Ascending aorta (tissue), 2 donors: ENCODE measurements at regions of chr4 and their contacts with region 1.

Region 1: DNA sequence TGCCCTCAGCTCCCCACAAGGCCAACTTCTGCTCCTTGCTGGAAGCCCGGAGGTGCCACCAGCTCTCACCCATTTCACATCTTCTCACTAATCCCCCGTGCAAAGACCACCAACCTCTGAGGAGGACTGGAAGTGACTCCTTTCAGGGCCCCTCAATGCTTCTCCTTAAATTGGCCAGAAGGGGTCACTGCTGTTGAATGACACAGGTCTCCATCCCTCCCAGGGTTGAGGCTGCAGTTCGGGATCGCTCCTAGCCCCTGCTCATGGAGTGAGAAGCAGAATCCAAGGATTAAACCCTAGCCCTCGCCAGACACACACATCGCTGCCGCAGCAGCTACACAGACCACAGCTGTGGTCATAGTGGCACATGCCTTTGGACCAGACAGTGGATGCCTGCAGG is 279.5 kb upstream of the TAPT1 start:
- DNase-seq: no peak
- H3K4me3 ChIP-seq: no peak overlapping the region
- H3K27ac ChIP-seq: no peak overlapping the region
- H3K4me1 ChIP-seq: no peaks in the 10 kb centered on the region
- H3K27me3 ChIP-seq: no peaks in the 10 kb centered on the region
- CTCF ChIP-seq: peak in 1 of 3 experiments; percentile 39

Region 2: DNA sequence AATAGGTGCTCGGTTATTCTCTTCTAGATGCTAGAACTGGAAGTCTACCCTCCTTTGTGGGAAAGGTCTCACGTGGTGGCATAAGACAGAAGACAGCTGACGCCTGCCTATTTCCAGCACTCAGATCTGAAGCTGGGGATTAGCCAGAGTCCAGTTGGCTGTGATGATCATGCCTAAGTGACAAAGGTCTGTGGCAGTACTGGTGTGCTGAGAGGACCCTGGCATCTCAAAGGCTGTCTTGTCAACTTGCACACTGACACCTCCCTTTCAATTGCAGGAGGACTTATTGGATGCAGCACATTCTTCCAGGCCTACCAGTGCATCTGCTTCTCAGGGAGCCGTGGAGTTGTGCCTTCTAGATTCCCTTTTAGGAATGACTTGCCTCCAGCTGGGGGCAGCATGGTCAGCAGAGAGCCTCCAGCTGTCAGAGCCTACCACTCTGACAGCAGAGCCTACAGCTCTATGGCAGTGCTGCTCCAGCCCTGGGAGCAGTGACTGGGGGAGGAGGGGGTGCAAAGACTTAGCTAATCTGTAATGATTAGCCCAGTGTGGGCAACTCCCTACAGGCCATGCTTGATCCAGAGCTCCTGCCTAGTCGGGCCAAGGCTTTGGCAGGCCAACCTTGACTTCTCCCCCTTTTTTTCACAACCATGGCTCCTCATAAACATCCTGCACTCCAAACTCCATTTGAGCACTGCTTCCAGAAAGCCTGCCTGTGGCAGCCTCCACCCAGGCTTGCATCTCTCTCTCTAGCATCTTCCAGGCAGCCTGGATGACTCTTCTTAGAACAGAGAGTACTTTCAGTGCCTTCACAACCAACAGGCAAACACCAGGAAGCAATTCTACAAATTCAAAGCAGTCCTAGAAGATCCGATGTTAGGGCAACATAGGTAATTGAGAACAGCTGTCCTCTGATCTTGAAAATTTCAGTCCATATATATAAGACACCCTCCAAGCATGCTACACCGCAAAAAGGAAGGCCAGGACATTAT is 529.0 kb before region 1 on chr4:
- intact Hi-C with region 1: no loop called
- DNase-seq: no peak
- H3K4me3 ChIP-seq: no peak overlapping the region
- H3K27ac ChIP-seq: no peak overlapping the region
- H3K4me1 ChIP-seq: no peaks in the 10 kb centered on the region
- H3K27me3 ChIP-seq: no peaks in the 10 kb centered on the region
- CTCF ChIP-seq: no peak

Region 3: GRCh38 chr4:17336524-17336961 is 830.8 kb after region 1 on chr4:
- intact Hi-C with region 1: loop called (anchors 10 kb)
- DNase-seq: no peak
- H3K4me3 ChIP-seq: no peak overlapping the region
- H3K27ac ChIP-seq: no peak overlapping the region
- H3K4me1 ChIP-seq: no peaks in the 10 kb centered on the region
- H3K27me3 ChIP-seq: no peaks in the 10 kb centered on the region
- CTCF ChIP-seq: no peak